Transverse colon (tissue), 4 donors: ENCODE measurements at regions of chr20 and their contacts with region 1.

Region 1: GRCh38 chr20:23386304-23387117 is 24.5 kb downstream of the GZF1 start:
- DNase-seq: no peak
- H3K4me3 ChIP-seq: no peak overlapping the region
- H3K27ac ChIP-seq: no peak overlapping the region
- H3K4me1 ChIP-seq: peaks cover 0 to 11% (median 5%) of the 10 kb centered on the region in 4 donors
- H3K27me3 ChIP-seq: no peaks in the 10 kb centered on the region
- CTCF ChIP-seq: no peak
- EP300 ChIP-seq: no peak
- POLR2A ChIP-seq: no peak

Region 2: GRCh38 chr20:22418738-22419137 is 967.8 kb before region 1 on chr20:
- in situ Hi-C with region 1: no loop called
- intact Hi-C with region 1: loop called (anchors 5 kb)
- DNase-seq: no peak
- H3K4me3 ChIP-seq: no peak overlapping the region
- H3K27ac ChIP-seq: no peak overlapping the region
- H3K4me1 ChIP-seq: no peaks in the 10 kb centered on the region
- H3K27me3 ChIP-seq: no peaks in the 10 kb centered on the region
- CTCF ChIP-seq: no peak
- EP300 ChIP-seq: no peak
- POLR2A ChIP-seq: no peak

Region 3: GRCh38 chr20:23320317-23320716 is 66.2 kb before region 1 on chr20:
- in situ Hi-C with region 1: no loop called
- intact Hi-C with region 1: no loop called
- DNase-seq: no peak
- H3K4me3 ChIP-seq: no peak overlapping the region
- H3K27ac ChIP-seq: no peak overlapping the region
- H3K4me1 ChIP-seq: no peaks in the 10 kb centered on the region
- H3K27me3 ChIP-seq: no peaks in the 10 kb centered on the region
- CTCF ChIP-seq: peak; percentile 16 to 36 (median 34)
- EP300 ChIP-seq: no peak
- POLR2A ChIP-seq: no peak